WTC11 (cell line): ENCODE measurements at regions of chr5 and their contacts with region 1.

Region 1: DNA sequence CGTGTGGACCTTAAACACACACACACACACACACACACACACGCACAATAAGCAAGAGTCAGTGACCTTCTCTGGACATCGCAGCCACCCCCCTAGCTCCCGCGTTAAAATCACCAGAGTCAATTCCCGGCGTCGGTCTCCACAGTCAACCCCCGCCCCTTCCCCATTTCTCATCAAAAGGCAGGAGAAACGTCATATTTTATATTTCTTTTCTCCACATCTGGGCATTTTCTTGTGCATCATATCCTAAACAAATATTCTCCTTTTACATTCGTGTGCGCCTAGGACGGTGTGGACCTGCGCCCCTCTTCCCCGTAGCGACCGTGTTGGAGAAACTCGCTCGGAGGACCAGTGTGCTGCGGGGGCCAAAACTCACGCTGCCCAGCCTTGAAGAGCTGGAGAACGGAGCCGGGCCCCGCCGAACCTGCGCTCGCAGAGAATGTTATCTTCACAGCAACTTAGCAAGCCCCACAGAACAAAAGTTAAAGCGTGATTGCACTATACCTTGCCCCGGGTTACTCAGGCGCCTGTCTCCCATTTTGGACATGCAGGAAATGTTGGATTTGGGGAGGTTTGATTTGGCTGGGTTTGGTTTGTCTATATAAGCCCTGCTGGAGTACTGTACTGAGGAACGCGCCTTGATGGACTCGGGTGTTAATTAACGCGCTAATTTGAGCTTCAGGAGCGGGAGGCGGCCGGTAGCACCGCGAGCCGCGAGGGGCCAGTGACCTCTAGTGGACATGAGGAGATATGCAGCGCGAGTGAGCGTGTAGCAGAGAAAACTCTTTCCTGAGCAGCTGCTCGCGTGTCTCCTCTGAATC is 192.4 kb downstream of the MEF2C start:
- DNase-seq: peak; percentile 76
- ATAC-seq: peak; percentile 12
- H3K4me3 Mint-ChIP-seq: peak overlapping the region; percentile 67
- H3K27ac Mint-ChIP-seq: no peak overlapping the region
- H3K4me1 Mint-ChIP-seq: peaks cover 80% of the 10 kb centered on the region
- H3K27me3 Mint-ChIP-seq: peaks cover 100% of the 10 kb centered on the region
- CTCF ChIP-seq: peak; percentile 98

Region 2: GRCh38 chr5:88140856-88141752 is 549.5 kb before region 1 on chr5:
- CTCF ChIA-PET with region 1: interaction called, 24 read pairs
- POLR2A ChIA-PET with region 1: no interaction called
- DNase-seq: peak; percentile 99
- ATAC-seq: peak; percentile 89
- H3K4me3 Mint-ChIP-seq: no peak overlapping the region
- H3K27ac Mint-ChIP-seq: no peak overlapping the region
- H3K4me1 Mint-ChIP-seq: peaks cover 12% of the 10 kb centered on the region; the same call in 1 of the 2 replicates
- H3K27me3 Mint-ChIP-seq: peaks cover 7% of the 10 kb centered on the region; the same call in 1 of the 2 replicates
- CTCF ChIP-seq: peak; percentile 82

Region 3: GRCh38 chr5:88660947-88661805 is 29.4 kb before region 1 on chr5:
- CTCF ChIA-PET with region 1: interaction called, 33 read pairs
- POLR2A ChIA-PET with region 1: no interaction called
- DNase-seq: peak; percentile 97
- ATAC-seq: peak; percentile 90
- H3K4me3 Mint-ChIP-seq: peak overlapping the region; percentile 63
- H3K27ac Mint-ChIP-seq: peak overlapping the region; percentile 59
- H3K4me1 Mint-ChIP-seq: peaks cover 60% of the 10 kb centered on the region
- H3K27me3 Mint-ChIP-seq: peaks cover 85% of the 10 kb centered on the region
- CTCF ChIP-seq: no peak

Region 4: GRCh38 chr5:88680253-88681132 is 10.1 kb before region 1 on chr5:
- CTCF ChIA-PET with region 1: interaction called, 35 read pairs
- POLR2A ChIA-PET with region 1: interaction called, 3 read pairs
- DNase-seq: peak; percentile 90
- ATAC-seq: peak; percentile 38
- H3K4me3 Mint-ChIP-seq: peak overlapping the region; percentile 61
- H3K27ac Mint-ChIP-seq: no peak overlapping the region
- H3K4me1 Mint-ChIP-seq: peaks cover 53% of the 10 kb centered on the region
- H3K27me3 Mint-ChIP-seq: peaks cover 98% of the 10 kb centered on the region
- CTCF ChIP-seq: peak; percentile 97

Region 5: DNA sequence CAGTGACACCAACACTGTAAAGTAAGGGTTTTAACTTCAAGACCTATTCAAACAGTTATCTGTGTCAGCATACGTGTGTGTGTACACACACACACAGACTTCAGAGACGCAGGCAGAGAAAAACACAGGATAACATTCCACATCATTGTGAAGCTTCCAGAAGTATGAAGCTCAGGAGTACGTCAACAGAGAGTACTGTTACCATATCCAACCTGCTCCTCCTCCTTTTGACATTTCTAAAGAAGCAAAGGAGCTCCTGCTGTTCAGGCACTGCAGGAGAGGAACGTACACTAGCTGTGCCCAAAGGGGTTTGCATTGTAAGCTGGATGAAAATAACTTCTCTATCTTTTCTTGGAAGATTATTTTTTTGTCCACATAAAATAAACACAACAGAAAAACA is 11.7 kb after region 1 on chr5:
- CTCF ChIA-PET with region 1: interaction called, 20 read pairs
- POLR2A ChIA-PET with region 1: interaction called, 3 read pairs
- DNase-seq: no peak
- ATAC-seq: peak; percentile 91
- H3K4me3 Mint-ChIP-seq: no peak overlapping the region
- H3K27ac Mint-ChIP-seq: no peak overlapping the region
- H3K4me1 Mint-ChIP-seq: peaks cover 26% of the 10 kb centered on the region
- H3K27me3 Mint-ChIP-seq: peaks cover 32% of the 10 kb centered on the region
- CTCF ChIP-seq: no peak

Region 6: GRCh38 chr5:88724201-88724600 is 33.6 kb after region 1 on chr5:
- CTCF ChIA-PET with region 1: interaction called, 34 read pairs
- POLR2A ChIA-PET with region 1: no interaction called
- DNase-seq: no peak
- ATAC-seq: no peak
- H3K4me3 Mint-ChIP-seq: no peak overlapping the region
- H3K27ac Mint-ChIP-seq: no peak overlapping the region
- H3K4me1 Mint-ChIP-seq: peaks cover 18% of the 10 kb centered on the region
- H3K27me3 Mint-ChIP-seq: peaks cover 19% of the 10 kb centered on the region
- CTCF ChIP-seq: no peak